ENCODE measurements at regions of chr10 and their contacts with region 1.

Region 1: GRCh38 chr10:127906548-127907377 is at the start of gene PTPRE:
- DNase-seq: peak; percentile 82
- H3K4me3 ChIP-seq: peak within 1 kb of the TSS; percentile 90
- H3K27ac ChIP-seq: peak within 1 kb of the TSS; percentile 96
- H3K4me1 ChIP-seq: peaks cover 52% of the 10 kb centered on the region
- H3K27me3 ChIP-seq: no peaks in the 10 kb centered on the region
- CTCF ChIP-seq: peak; percentile 93
- total RNA-seq, gene PTPRE: 13.8 TPM

Region 2: DNA sequence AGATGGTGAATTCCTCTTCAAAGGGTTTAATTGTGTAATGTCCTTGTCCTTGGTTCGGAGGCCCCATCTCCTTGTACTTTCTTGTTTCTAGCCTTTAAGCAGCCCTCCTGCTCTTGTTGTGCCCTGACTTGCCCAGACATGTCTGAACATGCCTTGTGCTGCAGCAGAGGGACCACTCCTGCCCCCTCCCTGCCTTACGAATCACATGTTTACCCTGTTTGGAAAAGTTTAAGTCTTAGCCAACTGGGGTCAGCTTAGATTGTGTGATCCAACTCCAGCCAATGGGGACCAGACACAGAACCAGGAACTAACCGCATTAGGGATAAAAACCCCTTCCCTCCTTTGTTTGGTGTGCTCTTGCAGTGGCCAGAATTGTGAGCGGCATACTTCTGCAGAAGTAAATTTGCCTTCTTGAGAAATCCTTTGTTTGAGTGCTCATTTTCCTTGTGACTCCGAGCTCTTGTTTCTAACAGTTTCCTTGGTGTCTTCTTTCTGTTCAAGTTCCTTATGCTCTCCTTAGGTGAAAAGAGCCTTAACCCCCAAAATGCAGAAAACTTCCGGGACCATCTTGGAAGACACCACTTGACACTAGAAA is 43.4 kb before region 1 on chr10:
- intact Hi-C with region 1: no loop called
- DNase-seq: no peak
- H3K4me3 ChIP-seq: no peak overlapping the region
- H3K27ac ChIP-seq: no peak overlapping the region
- H3K4me1 ChIP-seq: no peaks in the 10 kb centered on the region
- H3K27me3 ChIP-seq: peaks cover 4% of the 10 kb centered on the region
- CTCF ChIP-seq: no peak

Region 3: DNA sequence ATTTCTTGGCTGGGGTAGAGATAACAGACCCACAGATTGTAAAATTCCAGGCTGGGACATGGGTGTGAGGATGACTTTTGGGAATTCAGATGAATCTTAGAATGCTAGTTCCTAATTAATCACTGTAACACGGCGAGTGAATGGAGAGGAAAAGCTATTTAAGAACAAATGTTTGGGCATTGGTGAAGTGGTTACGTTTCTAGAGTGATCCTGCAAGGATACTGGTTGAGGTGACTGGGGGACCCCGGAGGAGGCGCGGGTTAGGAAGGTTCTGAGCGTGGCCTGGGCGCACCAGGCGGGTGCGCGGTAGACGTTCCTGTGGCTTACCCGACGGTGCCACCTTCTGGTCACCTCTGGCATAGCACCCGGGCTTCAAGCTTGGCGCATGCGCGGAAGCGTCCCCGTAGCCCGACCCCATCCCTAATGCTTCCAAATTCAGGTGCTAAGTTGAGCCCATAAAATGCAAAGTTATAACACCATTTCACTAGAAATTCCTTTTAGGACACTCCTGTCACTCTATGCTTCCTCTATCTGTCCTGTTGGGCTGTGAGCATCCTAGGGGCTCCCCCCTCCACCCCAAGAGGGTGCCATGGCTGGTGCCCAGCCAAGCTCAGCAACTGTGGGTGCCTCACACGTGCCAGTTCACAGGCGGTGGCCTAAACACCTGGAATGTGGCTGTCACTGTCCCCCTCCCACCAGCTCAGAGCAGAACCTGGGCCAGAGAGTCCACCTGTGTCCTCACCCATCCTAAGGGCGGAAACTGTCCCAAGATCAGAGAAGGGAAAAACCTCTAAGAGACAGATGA is 104.6 kb after region 1 on chr10:
- intact Hi-C with region 1: loop called (anchors 2 kb)
- DNase-seq: peak; percentile 78
- H3K4me3 ChIP-seq: peak overlapping the region; percentile 20
- H3K27ac ChIP-seq: no peak overlapping the region
- H3K4me1 ChIP-seq: peaks cover 37% of the 10 kb centered on the region
- H3K27me3 ChIP-seq: no peaks in the 10 kb centered on the region
- CTCF ChIP-seq: peak; percentile 100